ENCODE measurements at regions of chr17 and their contacts with region 1.

Region 1: GRCh38 chr17:78019367-78019975 is 61.0 kb downstream of the TNRC6C start:
- DNase-seq: no peak
- H3K4me3 ChIP-seq: no peak overlapping the region
- H3K27ac ChIP-seq: no peak overlapping the region
- H3K4me1 ChIP-seq: peaks cover 20 to 48% (median 35%) of the 10 kb centered on the region in 4 donors
- H3K27me3 ChIP-seq: no peaks in the 10 kb centered on the region
- CTCF ChIP-seq: peak; percentile 65 to 73 (median 69)
- EP300 ChIP-seq: no peak
- POLR2A ChIP-seq: no peak

Region 2: DNA sequence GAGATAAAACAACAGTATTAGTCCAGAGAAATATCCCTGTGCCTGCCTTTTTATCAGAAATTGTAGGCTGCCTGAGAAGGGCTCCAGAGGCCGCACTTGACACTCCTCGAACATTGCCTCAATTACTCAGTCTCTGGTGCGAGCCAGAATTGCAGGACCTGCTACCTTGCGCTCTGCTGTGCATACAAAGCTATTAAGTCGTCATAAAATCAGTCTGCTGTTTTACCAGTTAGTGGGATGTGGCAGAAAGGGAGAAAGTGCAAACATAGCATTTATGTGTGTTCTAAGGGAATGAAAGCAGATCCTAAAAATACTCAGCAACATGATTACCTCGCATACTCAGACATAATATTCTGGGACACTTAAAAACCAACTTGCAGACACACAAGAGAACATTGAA is 38.5 kb after region 1 on chr17:
- intact Hi-C with region 1: loop called (anchors 5 kb)
- DNase-seq: no peak
- H3K4me3 ChIP-seq: no peak overlapping the region
- H3K27ac ChIP-seq: peak overlapping the region in 2 of 4 donors; percentile 7 to 54
- H3K4me1 ChIP-seq: peaks cover 15 to 28% (median 26%) of the 10 kb centered on the region in 4 donors
- H3K27me3 ChIP-seq: no peaks in the 10 kb centered on the region
- CTCF ChIP-seq: no peak
- EP300 ChIP-seq: no peak
- POLR2A ChIP-seq: no peak

Region 3: DNA sequence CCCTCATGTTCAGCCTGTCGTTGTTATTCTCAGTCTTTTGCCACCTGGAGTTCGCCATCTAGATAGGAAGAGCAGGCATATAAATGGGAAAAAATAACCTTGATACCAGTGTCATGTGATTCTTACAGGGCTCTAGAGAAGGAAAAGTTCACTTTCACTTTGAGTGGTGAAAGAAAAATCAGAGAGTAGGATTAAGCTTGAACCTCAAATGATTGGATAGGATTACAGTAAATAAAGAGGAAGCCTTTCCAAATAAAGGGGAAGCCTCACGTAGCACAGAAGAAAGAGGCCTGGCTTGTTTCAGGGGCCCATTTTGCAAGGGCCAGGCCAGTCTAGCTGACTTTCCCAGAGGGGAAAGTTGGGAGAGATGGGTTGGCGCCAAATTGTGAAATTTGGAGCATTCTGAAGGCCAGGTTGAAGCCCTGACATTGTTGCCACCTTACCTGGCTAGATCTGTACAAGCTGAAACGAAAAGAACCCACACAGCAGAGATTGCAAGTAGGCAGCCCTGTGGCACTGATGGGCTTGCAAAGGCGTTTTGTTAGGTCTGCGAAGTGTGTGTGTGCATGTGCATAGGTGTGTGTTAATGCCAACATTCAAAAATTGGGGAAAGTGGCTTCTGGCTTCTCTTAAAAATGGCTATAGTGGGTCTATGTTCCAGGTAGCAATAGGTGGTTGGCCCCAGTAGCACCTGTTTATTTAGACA is 70.3 kb after region 1 on chr17:
- intact Hi-C with region 1: loop called (anchors 5 kb)
- DNase-seq: no peak
- H3K4me3 ChIP-seq: no peak overlapping the region
- H3K27ac ChIP-seq: peak overlapping the region; percentile 14 to 41 (median 40)
- H3K4me1 ChIP-seq: peaks cover 0 to 17% (median 8%) of the 10 kb centered on the region in 4 donors
- H3K27me3 ChIP-seq: no peaks in the 10 kb centered on the region
- CTCF ChIP-seq: no peak
- EP300 ChIP-seq: no peak
- POLR2A ChIP-seq: no peak

Measured in esophagus muscularis mucosa (tissue), 4 donors.